ENCODE measurements at regions of chr17 and their contacts with region 1.

Region 1: GRCh38 chr17:64506576-64507477 is at the start of gene CEP95:
- DNase-seq: peak; percentile 98
- H3K4me3 ChIP-seq: peak within 1 kb of the TSS; percentile 90
- H3K27ac ChIP-seq: peak within 1 kb of the TSS; percentile 99
- H3K4me1 ChIP-seq: peaks cover 10% of the 10 kb centered on the region
- H3K27me3 ChIP-seq: no peaks in the 10 kb centered on the region
- CTCF ChIP-seq: no peak
- total RNA-seq, gene CEP95: 66.8 and 72.9 TPM in 2 replicates

Region 2: DNA sequence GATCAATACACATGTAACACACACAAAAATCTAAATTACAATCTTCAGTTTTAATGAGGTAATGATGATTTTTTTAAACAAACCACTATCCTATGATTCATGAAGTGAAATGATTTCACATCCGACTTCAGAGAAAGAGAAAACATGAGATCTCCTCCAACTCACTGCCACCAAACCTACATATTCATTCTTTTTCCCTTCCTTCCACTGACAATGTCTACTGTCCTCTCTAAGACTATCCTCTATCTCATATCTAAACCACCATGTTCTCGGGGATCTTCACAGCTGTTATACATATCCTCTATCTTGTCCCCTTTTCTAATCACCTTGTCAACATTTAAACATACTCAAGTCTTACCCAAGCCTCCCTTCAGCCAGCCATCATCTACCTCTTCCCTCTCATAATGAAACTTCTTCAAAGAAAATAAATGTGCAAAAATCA is 101.7 kb after region 1 on chr17:
- CTCF ChIA-PET with region 1: no interaction called
- POLR2A ChIA-PET with region 1: no interaction called
- intact Hi-C with region 1: no loop called
- DNase-seq: no peak
- H3K4me3 ChIP-seq: no peak overlapping the region
- H3K27ac ChIP-seq: no peak overlapping the region
- H3K4me1 ChIP-seq: peaks cover 7% of the 10 kb centered on the region
- H3K27me3 ChIP-seq: no peaks in the 10 kb centered on the region
- CTCF ChIP-seq: no peak

Region 3: GRCh38 chr17:64648234-64648633 is 141.4 kb after region 1 on chr17:
- CTCF ChIA-PET with region 1: no interaction called
- POLR2A ChIA-PET with region 1: interaction called, 11 read pairs
- intact Hi-C with region 1: loop called (anchors 5 kb)
- DNase-seq: no peak
- H3K4me3 ChIP-seq: no peak overlapping the region
- H3K27ac ChIP-seq: no peak overlapping the region
- H3K4me1 ChIP-seq: no peaks in the 10 kb centered on the region
- H3K27me3 ChIP-seq: no peaks in the 10 kb centered on the region
- CTCF ChIP-seq: no peak

Region 4: GRCh38 chr17:64653325-64653984 is 146.6 kb after region 1 on chr17:
- CTCF ChIA-PET with region 1: no interaction called
- POLR2A ChIA-PET with region 1: interaction called, 11 read pairs
- intact Hi-C with region 1: loop called (anchors 5 kb)
- DNase-seq: no peak
- H3K4me3 ChIP-seq: no peak overlapping the region
- H3K27ac ChIP-seq: peak overlapping the region; percentile 65
- H3K4me1 ChIP-seq: no peaks in the 10 kb centered on the region
- H3K27me3 ChIP-seq: no peaks in the 10 kb centered on the region
- CTCF ChIP-seq: no peak

Region 5: DNA sequence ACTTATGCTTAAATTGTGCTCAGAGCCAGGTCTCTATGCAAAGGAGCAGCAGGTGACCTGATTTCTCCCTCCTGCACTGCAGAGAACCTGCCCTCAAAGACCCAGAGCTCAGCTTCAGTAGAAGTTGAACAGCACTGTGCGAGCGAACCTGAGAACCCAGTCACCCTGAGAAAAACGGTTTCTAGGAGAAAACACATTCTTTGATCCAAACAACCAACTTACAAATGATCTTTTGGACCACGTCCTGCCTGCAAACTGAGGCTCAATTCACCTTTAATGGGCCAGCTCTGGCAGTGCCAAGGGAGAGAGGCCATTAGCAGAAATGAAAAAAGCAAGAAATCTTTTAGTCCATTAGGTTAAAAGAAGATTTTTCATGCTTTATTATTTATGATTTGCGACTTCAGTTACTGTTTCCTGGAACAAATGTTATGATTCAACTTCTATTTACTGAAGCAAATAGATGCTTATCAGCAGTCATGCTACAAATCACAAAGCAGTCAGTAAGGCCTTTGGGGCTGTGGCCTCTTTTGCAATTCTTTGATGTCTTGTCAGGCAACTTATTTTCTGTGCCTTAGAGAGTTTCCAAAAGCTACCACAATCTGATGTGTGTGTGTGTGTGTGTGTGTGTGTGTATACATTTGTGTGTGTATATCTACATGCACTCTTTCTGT is 478.2 kb after region 1 on chr17:
- CTCF ChIA-PET with region 1: no interaction called
- POLR2A ChIA-PET with region 1: no interaction called
- intact Hi-C with region 1: loop called (anchors 5 kb)
- DNase-seq: no peak
- H3K4me3 ChIP-seq: no peak overlapping the region
- H3K27ac ChIP-seq: no peak overlapping the region
- H3K4me1 ChIP-seq: peaks cover 16% of the 10 kb centered on the region
- H3K27me3 ChIP-seq: no peaks in the 10 kb centered on the region
- CTCF ChIP-seq: no peak

Measured in A673 (cell line).